ENCODE measurements at regions of chr4 and their contacts with region 1.

Region 1: DNA sequence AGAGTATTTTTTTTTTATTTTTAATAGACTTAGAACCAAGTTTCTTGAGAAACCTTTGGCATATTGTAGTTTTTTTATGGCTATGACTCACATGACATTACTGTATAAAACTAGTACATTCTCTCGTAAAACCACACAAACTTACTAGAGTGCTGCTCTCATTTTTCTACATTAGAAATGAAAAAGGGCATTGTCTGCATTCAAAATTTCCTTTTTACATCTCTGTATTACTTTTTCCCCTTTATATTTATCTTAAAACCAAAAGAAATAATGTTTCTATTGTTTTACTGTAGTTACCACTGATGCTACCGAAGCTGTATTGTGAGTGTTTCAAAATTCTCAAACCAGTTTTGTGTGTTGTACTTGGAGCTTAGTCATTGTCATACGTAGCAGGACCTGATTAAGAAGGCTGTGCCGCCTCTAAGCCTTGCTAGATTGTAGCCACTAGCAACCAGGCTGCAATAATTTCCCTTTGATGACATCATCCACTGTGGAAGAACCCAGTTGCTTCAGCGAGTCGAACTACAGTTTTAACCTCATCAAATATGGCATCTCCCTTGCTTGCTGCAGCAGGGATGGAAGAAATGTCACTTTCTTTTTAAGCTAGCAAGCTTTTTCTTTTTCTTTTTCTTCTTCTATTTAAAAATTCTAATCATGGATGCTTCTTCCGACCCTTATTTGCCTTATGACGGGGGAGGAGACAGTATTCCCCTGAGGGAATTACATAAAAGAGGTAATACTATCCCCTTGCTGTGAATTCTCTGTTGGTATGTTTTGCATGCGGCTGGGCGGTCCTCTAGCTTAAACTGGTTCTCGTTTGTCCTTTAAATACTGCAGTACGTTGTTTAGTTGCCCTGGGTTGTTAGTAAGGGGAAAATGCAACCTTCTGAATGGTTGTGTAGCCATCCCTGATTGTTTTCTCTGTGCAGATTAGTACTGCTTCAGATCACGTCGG is 39.6 kb downstream of the CLCN3 start:
- DNase-seq: peak in 1 of 2 experiments; percentile 7
- H3K4me3 ChIP-seq: peak overlapping the region; percentile 27 to 56 (median 37)
- H3K27ac ChIP-seq: peak overlapping the region; percentile 67
- H3K4me1 ChIP-seq: peaks cover 0 to 2% (median 2%) of the 10 kb centered on the region in 4 experiments; a peak in 3 of 7 replicates
- H3K27me3 ChIP-seq: no peaks in the 10 kb centered on the region
- CTCF ChIP-seq: no peak
- EP300 ChIP-seq: no peak
- POLR2A ChIP-seq: peak; percentile 62 to 89
- RAD21 ChIP-seq: no peak

Region 2: DNA sequence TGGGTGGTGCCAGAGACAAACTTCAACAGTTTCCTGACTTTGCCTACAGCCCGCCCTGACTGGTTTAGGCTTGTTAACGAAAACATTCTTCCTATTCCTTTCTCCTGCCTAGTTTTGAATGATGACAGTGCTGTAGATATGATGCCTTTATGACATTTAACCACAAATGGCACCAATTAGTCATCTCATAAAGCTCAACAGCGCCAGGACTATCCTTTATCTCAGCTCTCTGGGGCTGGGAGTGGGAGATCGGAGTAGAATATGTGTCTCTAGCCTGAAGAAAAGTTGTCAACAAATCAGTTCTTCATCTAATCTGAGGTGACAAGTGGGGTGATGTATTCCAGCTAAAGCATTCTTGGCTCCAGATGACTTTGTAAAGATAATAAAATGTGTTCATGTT is 324.7 kb before region 1 on chr4:
- CTCF ChIA-PET with region 1: no interaction called
- POLR2A ChIA-PET with region 1: no interaction called
- DNase-seq: no peak
- H3K4me3 ChIP-seq: no peak overlapping the region
- H3K27ac ChIP-seq: no peak overlapping the region
- H3K4me1 ChIP-seq: no peaks in the 10 kb centered on the region
- H3K27me3 ChIP-seq: peaks cover 0 to 1% (median 0%) of the 10 kb centered on the region in 4 experiments; a peak in 1 of 7 replicates
- CTCF ChIP-seq: no peak
- EP300 ChIP-seq: no peak
- POLR2A ChIP-seq: no peak
- RAD21 ChIP-seq: no peak

Region 3: DNA sequence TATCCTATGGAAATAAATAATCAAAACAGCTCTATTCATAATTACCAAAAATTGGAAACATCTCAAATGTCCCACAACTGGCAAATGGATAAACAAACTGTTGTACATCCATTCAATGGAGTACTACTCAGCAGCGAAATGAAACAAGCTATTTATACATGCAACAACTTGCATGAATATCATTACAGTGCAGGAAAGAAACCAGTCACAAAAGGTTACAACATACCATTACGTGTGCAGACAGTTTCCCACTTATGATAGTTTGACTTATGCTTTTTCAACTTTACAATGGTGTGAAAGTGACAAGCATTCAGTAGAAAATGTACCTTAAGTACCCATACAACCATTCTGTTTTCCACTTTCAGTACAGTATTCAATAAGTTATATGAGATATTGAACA is 129.9 kb before region 1 on chr4:
- CTCF ChIA-PET with region 1: no interaction called
- POLR2A ChIA-PET with region 1: no interaction called
- DNase-seq: no peak
- H3K4me3 ChIP-seq: no peak overlapping the region
- H3K27ac ChIP-seq: no peak overlapping the region
- H3K4me1 ChIP-seq: no peaks in the 10 kb centered on the region
- H3K27me3 ChIP-seq: no peaks in the 10 kb centered on the region
- CTCF ChIP-seq: no peak
- EP300 ChIP-seq: no peak
- POLR2A ChIP-seq: no peak
- RAD21 ChIP-seq: no peak

Region 4: GRCh38 chr4:169619959-169620879 is 39.8 kb before region 1 on chr4 and contains the start of gene CLCN3:
- CTCF ChIA-PET with region 1: interaction called, 6 read pairs
- POLR2A ChIA-PET with region 1: interaction called, 11 read pairs
- DNase-seq: peak; percentile 84 to 95
- H3K4me3 ChIP-seq: peak within 1 kb of the TSS; percentile 81 to 88 (median 87)
- H3K27ac ChIP-seq: peak within 1 kb of the TSS; percentile 88
- H3K4me1 ChIP-seq: peaks cover 0 to 3% (median 0%) of the 10 kb centered on the region in 4 experiments; a peak in 2 of 7 replicates
- H3K27me3 ChIP-seq: no peaks in the 10 kb centered on the region
- CTCF ChIP-seq: no peak; a peak in 1 of 4 replicates
- EP300 ChIP-seq: no peak
- POLR2A ChIP-seq: peak; percentile 71 to 86; a peak in 2 of 3 replicates
- RAD21 ChIP-seq: no peak
- total RNA-seq, gene CLCN3: 25.8 and 32.8 TPM in 2 replicates

Region 5: GRCh38 chr4:169649545-169650226 is 10.3 kb before region 1 on chr4:
- CTCF ChIA-PET with region 1: interaction called, 3 read pairs
- POLR2A ChIA-PET with region 1: interaction called, 12 read pairs
- DNase-seq: no peak
- H3K4me3 ChIP-seq: no peak overlapping the region
- H3K27ac ChIP-seq: no peak overlapping the region
- H3K4me1 ChIP-seq: no peaks in the 10 kb centered on the region
- H3K27me3 ChIP-seq: peaks cover 0 to 1% (median 0%) of the 10 kb centered on the region in 4 experiments; a peak in 1 of 7 replicates
- CTCF ChIP-seq: no peak
- EP300 ChIP-seq: no peak
- POLR2A ChIP-seq: no peak
- RAD21 ChIP-seq: no peak

Region 6: GRCh38 chr4:169675825-169676224 is 15.8 kb after region 1 on chr4:
- CTCF ChIA-PET with region 1: no interaction called
- POLR2A ChIA-PET with region 1: no interaction called
- DNase-seq: no peak
- H3K4me3 ChIP-seq: no peak overlapping the region
- H3K27ac ChIP-seq: no peak overlapping the region
- H3K4me1 ChIP-seq: no peaks in the 10 kb centered on the region
- H3K27me3 ChIP-seq: no peaks in the 10 kb centered on the region
- CTCF ChIP-seq: no peak
- EP300 ChIP-seq: no peak
- POLR2A ChIP-seq: no peak
- RAD21 ChIP-seq: no peak

Measured in H1 (cell line).